HEK293 (cell line): ENCODE measurements at regions of chr4 and their contacts with region 1.

Region 1: GRCh38 chr4:38319456-38320342 is 344.3 kb upstream of the KLF3 start:
- H3K4me3 ChIP-seq: no peak overlapping the region
- H3K27ac ChIP-seq: peak overlapping the region; percentile 57; the same call in 1 of the 2 replicates
- H3K4me1 ChIP-seq: no peaks in the 10 kb centered on the region
- CTCF ChIP-seq: peak; percentile 77

Region 2: GRCh38 chr4:38357546-38357945 is 37.8 kb after region 1 on chr4:
- CTCF ChIA-PET with region 1: no interaction called
- POLR2A ChIA-PET with region 1: no interaction called
- H3K4me3 ChIP-seq: no peak overlapping the region
- H3K27ac ChIP-seq: no peak overlapping the region
- H3K4me1 ChIP-seq: no peaks in the 10 kb centered on the region
- CTCF ChIP-seq: no peak

Region 3: GRCh38 chr4:38675146-38676121 is 355.7 kb after region 1 on chr4:
- CTCF ChIA-PET with region 1: interaction called, 17 read pairs
- POLR2A ChIA-PET with region 1: interaction called, 4 read pairs
- H3K4me3 ChIP-seq: no peak overlapping the region
- H3K27ac ChIP-seq: no peak overlapping the region
- H3K4me1 ChIP-seq: peaks cover 12% of the 10 kb centered on the region
- CTCF ChIP-seq: peak; percentile 40; the same call in 1 of the 2 replicates